ENCODE measurements at regions of chr17 and their contacts with region 1.

Region 1: GRCh38 chr17:27805520-27806146 is 5.3 kb upstream of the NOS2 start:
- DNase-seq: peak; percentile 91
- H3K4me3 Mint-ChIP-seq: peak overlapping the region; percentile 53
- H3K27ac Mint-ChIP-seq: peak overlapping the region; percentile 85
- H3K4me1 Mint-ChIP-seq: peaks cover 47% of the 10 kb centered on the region
- H3K27me3 Mint-ChIP-seq: peaks cover 13% of the 10 kb centered on the region

Region 2: DNA sequence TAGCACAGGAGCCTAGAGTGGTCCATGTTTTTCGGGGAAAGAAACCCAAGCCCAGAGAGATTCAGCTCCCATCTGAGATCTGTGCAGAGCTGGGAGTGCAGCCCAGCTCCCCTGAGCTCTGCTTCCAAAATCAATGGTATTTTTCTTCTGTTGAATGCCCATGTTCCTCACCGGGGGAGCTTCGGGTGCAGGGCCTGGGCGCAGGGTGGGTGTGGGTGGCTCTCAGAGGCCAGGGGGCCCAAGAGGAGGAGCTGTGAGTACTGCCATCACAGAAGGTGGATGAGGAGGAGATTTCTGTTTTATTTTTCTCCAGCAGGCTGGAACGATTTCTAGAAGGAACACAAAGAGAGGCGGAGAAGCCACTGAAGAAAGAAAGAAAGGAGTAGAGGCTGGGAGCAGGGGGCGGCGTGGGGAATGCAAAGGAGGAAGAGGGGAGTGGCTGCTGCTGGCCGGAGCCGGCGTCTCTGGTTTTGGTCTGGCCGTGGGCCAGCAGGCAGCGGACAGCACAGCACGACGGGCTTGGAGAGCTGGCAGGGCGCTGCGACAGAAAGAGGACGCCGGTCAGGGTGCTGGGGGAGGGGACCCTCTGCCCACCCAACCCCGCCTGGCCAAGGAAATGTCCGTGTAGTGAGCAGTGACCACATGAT is 425.6 kb before region 1 on chr17:
- CTCF ChIA-PET with region 1: no interaction called
- DNase-seq: no peak
- H3K4me3 Mint-ChIP-seq: no peak overlapping the region
- H3K27ac Mint-ChIP-seq: no peak overlapping the region
- H3K4me1 Mint-ChIP-seq: no peaks in the 10 kb centered on the region
- H3K27me3 Mint-ChIP-seq: peaks cover 65% of the 10 kb centered on the region

Region 3: DNA sequence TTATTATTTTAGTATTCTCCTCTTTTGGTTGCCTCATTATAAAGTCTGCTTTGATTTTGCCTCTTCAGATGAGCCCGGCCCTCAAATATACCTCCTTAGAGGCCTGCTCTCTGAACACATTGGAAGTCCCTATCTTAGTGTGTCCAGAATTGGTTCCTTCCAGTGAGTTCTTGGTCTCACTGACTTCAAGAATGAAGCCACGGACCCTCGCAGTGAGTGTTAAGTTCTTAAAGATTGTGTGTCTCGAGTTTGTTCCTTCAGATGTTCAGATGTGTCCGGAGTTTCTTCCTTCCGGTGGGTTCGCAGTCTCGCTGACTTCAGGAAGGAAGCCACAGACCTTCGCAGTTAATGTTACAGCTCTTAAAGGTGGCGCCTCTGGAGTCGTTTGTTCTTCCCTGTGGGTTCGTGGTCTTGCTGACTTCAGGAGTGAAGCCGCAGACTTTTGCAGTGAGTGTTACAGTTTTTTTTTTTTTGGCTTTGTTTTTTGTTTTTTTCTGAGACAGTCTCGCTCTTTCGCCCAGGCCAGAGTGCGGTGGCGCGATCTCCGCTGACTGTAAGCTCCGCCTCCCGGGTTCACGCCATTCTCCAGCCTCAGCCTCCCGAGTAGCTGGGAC is 40.5 kb after region 1 on chr17:
- CTCF ChIA-PET with region 1: interaction called, 12 read pairs
- DNase-seq: peak; percentile 65
- H3K4me3 Mint-ChIP-seq: peak overlapping the region; percentile 57
- H3K27ac Mint-ChIP-seq: peak overlapping the region; percentile 82
- H3K4me1 Mint-ChIP-seq: peaks cover 29% of the 10 kb centered on the region
- H3K27me3 Mint-ChIP-seq: peaks cover 17% of the 10 kb centered on the region

Region 4: DNA sequence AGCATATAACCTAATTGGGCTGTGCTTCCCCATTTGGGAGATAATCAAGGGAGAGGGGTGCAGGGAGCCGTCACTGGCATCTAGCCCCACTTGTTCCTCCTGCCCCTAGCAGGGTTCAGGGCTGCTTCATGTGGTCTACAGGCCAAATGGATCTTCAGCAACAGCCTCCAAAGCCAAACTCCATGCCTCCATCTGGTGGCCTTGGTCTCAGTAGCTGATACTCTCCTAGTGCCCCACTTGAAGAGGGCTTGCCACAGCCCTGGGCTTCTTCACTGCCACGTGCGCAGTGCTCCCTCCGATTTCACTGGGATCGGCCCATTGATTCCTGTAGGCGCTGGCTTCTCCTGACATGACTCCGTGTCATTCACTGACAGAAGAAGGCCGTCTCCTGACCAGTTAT is 62.9 kb after region 1 on chr17:
- CTCF ChIA-PET with region 1: interaction called, 19 read pairs
- DNase-seq: no peak
- H3K4me3 Mint-ChIP-seq: no peak overlapping the region
- H3K27ac Mint-ChIP-seq: no peak overlapping the region
- H3K4me1 Mint-ChIP-seq: no peaks in the 10 kb centered on the region
- H3K27me3 Mint-ChIP-seq: peaks cover 21% of the 10 kb centered on the region

Region 5: DNA sequence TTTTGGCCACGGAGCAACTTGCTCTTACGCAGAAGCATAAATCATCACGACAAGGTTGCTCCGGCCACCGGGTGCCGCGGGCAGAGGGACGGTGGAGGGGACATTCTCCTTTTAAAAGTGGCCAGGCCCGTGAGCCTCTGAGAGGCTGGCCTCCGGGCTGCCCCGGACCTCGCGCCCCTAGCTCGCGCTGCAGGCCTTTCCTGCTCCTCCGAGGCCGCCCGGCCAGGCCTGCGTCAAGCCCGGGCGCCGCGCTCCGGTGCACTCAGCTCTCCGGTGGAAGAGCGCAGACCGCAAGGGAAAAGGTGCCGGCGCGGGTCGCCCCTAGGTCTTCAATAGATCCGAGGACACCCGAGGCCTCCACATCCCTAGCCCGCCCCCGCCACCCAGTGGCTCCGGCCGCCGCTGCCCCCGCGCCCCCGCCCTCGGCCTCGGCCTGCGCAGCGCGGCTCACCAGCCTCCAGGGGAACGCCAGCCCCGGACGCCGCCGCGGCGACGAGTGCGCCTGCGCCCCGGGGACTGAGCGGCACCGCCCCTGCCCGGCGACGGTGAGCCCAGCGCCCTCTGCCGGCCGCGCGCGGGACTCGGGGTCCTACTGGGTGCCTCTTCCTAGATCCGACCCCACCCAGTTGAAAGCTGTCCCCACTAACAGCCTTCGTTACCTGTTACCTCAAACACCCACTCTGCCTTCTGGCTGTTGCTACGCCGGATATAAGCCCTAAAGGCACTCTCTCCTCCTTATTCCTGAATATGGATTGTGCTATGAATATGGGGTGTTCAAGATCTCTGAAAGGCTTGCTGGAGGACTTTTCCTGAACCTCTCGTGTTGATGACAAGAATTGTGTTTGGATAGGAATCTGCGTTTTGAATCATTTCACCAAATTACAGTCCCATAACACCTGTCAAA is 87.5 kb after region 1 on chr17 and contains the start of gene LYRM9:
- CTCF ChIA-PET with region 1: interaction called, 86 read pairs
- DNase-seq: peak; percentile 93
- H3K4me3 Mint-ChIP-seq: peak within 1 kb of the TSS; percentile 72
- H3K27ac Mint-ChIP-seq: peak within 1 kb of the TSS; percentile 75
- H3K4me1 Mint-ChIP-seq: peaks cover 16% of the 10 kb centered on the region
- H3K27me3 Mint-ChIP-seq: peaks cover 21% of the 10 kb centered on the region

Region 6: GRCh38 chr17:28071891-28072606 is 266.4 kb after region 1 on chr17:
- CTCF ChIA-PET with region 1: no interaction called
- DNase-seq: no peak
- H3K4me3 Mint-ChIP-seq: no peak overlapping the region
- H3K27ac Mint-ChIP-seq: peak overlapping the region; percentile 82
- H3K4me1 Mint-ChIP-seq: peaks cover 38% of the 10 kb centered on the region
- H3K27me3 Mint-ChIP-seq: no peaks in the 10 kb centered on the region

Measured in activated naive CD4-positive, alpha-beta T cell treated with anti-CD3 and anti-CD28 coated beads, Interleukin-2, amount 10 ng/mL, durations not matched to agents 7 days and 5 days (primary cell).